ENCODE measurements at regions of chr4 and their contacts with region 1.

Region 1: GRCh38 chr4:36285784-36286480 is 4.5 kb downstream of the DTHD1 start:
- DNase-seq: peak; percentile 43
- ATAC-seq: peak; percentile 96
- H3K4me3 ChIP-seq: peak overlapping the region in 1 of 5 experiments; percentile 1
- H3K4me3 Mint-ChIP-seq: peak overlapping the region; percentile 38
- H3K27ac ChIP-seq: no peak overlapping the region
- H3K27ac Mint-ChIP-seq: peak overlapping the region; percentile 43
- H3K4me1 ChIP-seq: peaks cover 4 to 9% of the 10 kb centered on the region in 2 donors
- H3K4me1 Mint-ChIP-seq: peaks cover 17% of the 10 kb centered on the region
- H3K27me3 ChIP-seq: peaks cover 0 to 4% (median 0%) of the 10 kb centered on the region in 4 experiments
- H3K27me3 Mint-ChIP-seq: no peaks in the 10 kb centered on the region
- CTCF ChIP-seq: no peak

Region 2: GRCh38 chr4:36255577-36255976 is 30.4 kb before region 1 on chr4:
- CTCF ChIA-PET with region 1: no interaction called
- POLR2A ChIA-PET with region 1: no interaction called
- intact Hi-C with region 1: loop called (anchors 2 kb)
- DNase-seq: peak; percentile 76
- ATAC-seq: peak; percentile 92
- H3K4me3 ChIP-seq: peak overlapping the region in 4 of 5 experiments; percentile 15 to 61 (median 18)
- H3K4me3 Mint-ChIP-seq: peak overlapping the region; percentile 78
- H3K27ac ChIP-seq: peak overlapping the region; percentile 13 to 80
- H3K27ac Mint-ChIP-seq: peak overlapping the region; percentile 93
- H3K4me1 ChIP-seq: peaks cover 22 to 26% of the 10 kb centered on the region in 2 donors
- H3K4me1 Mint-ChIP-seq: peaks cover 32% of the 10 kb centered on the region
- H3K27me3 ChIP-seq: no peaks in the 10 kb centered on the region
- H3K27me3 Mint-ChIP-seq: no peaks in the 10 kb centered on the region
- CTCF ChIP-seq: no peak